HEK293 (cell line): ENCODE measurements at regions of chr6 and their contacts with region 1.

Region 1: GRCh38 chr6:138001750-138002349 is 105.4 kb downstream of the PERP start:
- H3K4me3 ChIP-seq: no peak overlapping the region
- H3K27ac ChIP-seq: no peak overlapping the region
- H3K4me1 ChIP-seq: no peaks in the 10 kb centered on the region
- CTCF ChIP-seq: peak; percentile 45; the same call in 1 of the 2 replicates

Region 2: GRCh38 chr6:137697267-137697938 is 304.4 kb before region 1 on chr6:
- CTCF ChIA-PET with region 1: interaction called, 13 read pairs
- POLR2A ChIA-PET with region 1: no interaction called
- H3K4me3 ChIP-seq: no peak overlapping the region
- H3K27ac ChIP-seq: no peak overlapping the region
- H3K4me1 ChIP-seq: no peaks in the 10 kb centered on the region
- CTCF ChIP-seq: no peak

Region 3: GRCh38 chr6:137799950-137800568 is 201.8 kb before region 1 on chr6:
- CTCF ChIA-PET with region 1: interaction called, 14 read pairs
- POLR2A ChIA-PET with region 1: no interaction called
- H3K4me3 ChIP-seq: no peak overlapping the region
- H3K27ac ChIP-seq: no peak overlapping the region
- H3K4me1 ChIP-seq: no peaks in the 10 kb centered on the region
- CTCF ChIP-seq: no peak

Region 4: GRCh38 chr6:137982418-137983189 is 19.2 kb before region 1 on chr6:
- CTCF ChIA-PET with region 1: interaction called, 12 read pairs
- POLR2A ChIA-PET with region 1: no interaction called
- H3K4me3 ChIP-seq: no peak overlapping the region
- H3K27ac ChIP-seq: peak overlapping the region; percentile 0
- H3K4me1 ChIP-seq: peaks cover 3% of the 10 kb centered on the region; the same call in 1 of the 2 replicates
- CTCF ChIP-seq: no peak

Region 5: GRCh38 chr6:137989664-137990063 is 12.2 kb before region 1 on chr6:
- CTCF ChIA-PET with region 1: interaction called, 22 read pairs
- POLR2A ChIA-PET with region 1: no interaction called
- H3K4me3 ChIP-seq: no peak overlapping the region
- H3K27ac ChIP-seq: no peak overlapping the region
- H3K4me1 ChIP-seq: no peaks in the 10 kb centered on the region
- CTCF ChIP-seq: no peak

Region 6: GRCh38 chr6:138012682-138013081 is 10.8 kb after region 1 on chr6:
- CTCF ChIA-PET with region 1: interaction called, 37 read pairs
- POLR2A ChIA-PET with region 1: no interaction called
- H3K4me3 ChIP-seq: no peak overlapping the region
- H3K27ac ChIP-seq: no peak overlapping the region
- H3K4me1 ChIP-seq: no peaks in the 10 kb centered on the region
- CTCF ChIP-seq: no peak

Region 7: DNA sequence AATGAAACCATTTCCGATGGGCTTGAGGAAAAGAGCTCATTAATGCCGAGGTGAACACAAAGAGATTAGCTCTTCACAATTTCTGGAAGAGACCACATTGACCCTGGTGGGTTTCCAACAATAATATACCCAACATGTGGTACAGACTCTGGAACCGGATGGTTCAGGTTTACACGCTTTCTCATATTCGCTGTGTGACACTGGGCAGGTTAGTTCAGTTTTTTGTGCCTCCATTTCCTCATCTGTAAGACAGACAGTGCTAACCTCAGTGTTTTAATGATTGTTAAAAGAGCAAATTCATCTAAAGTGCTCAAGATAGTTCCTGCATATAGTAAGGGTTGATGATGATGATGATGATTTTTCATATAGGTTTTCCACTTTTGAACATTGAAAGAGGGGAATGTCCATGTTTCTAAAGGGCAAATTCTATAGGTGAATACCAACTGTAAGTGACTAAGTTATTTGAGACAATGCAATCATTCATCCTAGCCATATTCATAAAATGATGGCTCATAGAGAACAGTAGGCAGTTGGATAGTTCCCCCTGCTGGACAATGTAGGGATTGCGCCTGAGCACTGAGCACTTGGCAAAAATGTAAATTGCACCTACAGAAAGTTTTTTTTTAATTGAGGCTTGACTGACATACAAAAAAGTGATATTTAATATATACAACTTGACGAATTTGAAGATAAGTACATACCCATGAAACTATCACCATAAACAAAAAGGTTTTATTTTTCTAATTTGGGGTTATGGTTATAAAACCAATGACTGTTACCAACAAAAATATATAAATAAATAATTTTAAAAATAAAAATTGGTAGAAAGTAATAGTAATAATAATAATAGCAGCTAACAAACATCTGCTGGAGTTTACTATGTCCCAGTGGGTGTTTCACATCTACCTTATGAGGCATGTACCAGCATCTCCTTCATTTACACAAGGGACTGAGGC is 107.5 kb after region 1 on chr6:
- CTCF ChIA-PET with region 1: interaction called, 188 read pairs
- POLR2A ChIA-PET with region 1: interaction called, 36 read pairs
- H3K4me3 ChIP-seq: no peak overlapping the region
- H3K27ac ChIP-seq: no peak overlapping the region
- H3K4me1 ChIP-seq: peaks cover 11% of the 10 kb centered on the region
- CTCF ChIP-seq: no peak

Region 8: DNA sequence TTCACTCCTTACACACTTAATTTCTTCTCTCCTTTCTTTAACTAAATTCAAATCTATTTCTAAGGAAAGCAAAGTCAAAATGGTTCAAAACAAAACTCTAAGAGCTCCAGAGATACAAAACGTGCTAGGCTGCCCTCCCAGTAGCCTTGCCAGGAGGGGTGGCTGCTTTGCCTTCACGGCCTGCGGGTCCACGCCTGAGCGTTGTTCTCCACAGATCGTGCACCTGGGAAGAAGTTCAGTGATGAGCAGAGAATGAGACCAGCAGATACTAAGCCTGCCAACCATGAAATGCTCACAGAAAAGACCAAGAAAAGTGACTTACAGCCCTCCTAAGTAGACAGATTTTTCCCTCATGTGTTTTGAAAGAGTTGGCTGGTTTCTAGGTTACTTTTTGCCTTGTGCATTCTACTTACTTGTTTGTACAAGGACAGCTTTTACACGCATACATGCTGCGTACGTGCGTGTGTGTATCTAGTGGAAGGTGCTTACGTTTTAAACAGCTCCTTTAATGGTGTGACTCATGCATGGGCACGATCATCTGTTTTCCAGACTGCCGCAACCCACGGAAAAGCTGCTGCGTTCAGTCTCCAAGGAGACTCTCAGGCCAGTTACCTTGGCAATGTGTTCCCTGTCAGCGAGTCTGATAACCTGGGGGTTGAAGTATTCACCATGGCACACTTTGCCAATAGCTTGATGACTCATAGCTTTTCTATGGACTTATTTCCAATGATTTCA is 248.8 kb after region 1 on chr6:
- CTCF ChIA-PET with region 1: no interaction called
- POLR2A ChIA-PET with region 1: no interaction called
- H3K4me3 ChIP-seq: no peak overlapping the region
- H3K27ac ChIP-seq: no peak overlapping the region
- H3K4me1 ChIP-seq: no peaks in the 10 kb centered on the region
- CTCF ChIP-seq: no peak

Region 9: GRCh38 chr6:138264372-138264880 is 262.6 kb after region 1 on chr6:
- CTCF ChIA-PET with region 1: no interaction called
- POLR2A ChIA-PET with region 1: no interaction called
- H3K4me3 ChIP-seq: no peak overlapping the region
- H3K27ac ChIP-seq: no peak overlapping the region
- H3K4me1 ChIP-seq: no peaks in the 10 kb centered on the region
- CTCF ChIP-seq: no peak